ENCODE measurements at regions of chr1 and their contacts with region 1.

Region 1: DNA sequence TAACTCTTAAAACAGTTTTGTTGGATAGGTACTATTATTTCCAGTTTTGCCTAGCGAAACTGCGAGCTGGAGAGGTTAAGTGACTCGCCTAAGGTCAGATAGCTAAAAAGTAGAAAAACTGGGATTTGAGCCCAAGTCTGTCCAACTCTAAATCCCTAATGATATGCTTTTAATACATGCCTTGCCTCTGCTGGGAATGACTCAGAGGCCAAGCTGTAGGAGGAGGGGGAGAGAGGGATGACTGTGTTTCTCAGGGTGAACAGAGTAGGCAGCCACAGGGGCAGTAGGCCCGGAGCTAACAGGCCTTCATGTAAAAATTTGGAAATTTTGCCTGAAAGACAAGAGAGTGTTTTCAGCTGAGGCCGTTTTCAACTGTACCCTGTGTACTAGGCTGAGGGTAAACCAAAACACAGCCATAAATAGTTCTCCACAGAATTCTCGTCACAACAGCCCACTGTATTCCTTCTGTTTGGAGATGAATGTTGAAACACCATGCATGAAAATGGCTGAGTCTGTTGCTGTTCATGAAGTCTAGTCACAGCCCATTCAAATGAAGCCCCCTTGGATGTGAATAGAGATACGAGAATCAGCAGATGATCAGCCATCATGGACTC is 107.5 kb upstream of the HOOK1 start:
- DNase-seq: no peak
- H3K4me3 ChIP-seq: no peak overlapping the region
- H3K27ac ChIP-seq: peak overlapping the region; percentile 22 to 44
- H3K4me1 ChIP-seq: no peaks in the 10 kb centered on the region
- H3K27me3 ChIP-seq: no peaks in the 10 kb centered on the region
- CTCF ChIP-seq: no peak
- POLR2A ChIP-seq: no peak

Region 2: GRCh38 chr1:59653968-59654367 is 53.3 kb before region 1 on chr1:
- intact Hi-C with region 1: no loop called
- DNase-seq: no peak
- H3K4me3 ChIP-seq: no peak overlapping the region
- H3K27ac ChIP-seq: no peak overlapping the region
- H3K4me1 ChIP-seq: no peaks in the 10 kb centered on the region
- H3K27me3 ChIP-seq: no peaks in the 10 kb centered on the region
- CTCF ChIP-seq: no peak
- POLR2A ChIP-seq: no peak

Region 3: DNA sequence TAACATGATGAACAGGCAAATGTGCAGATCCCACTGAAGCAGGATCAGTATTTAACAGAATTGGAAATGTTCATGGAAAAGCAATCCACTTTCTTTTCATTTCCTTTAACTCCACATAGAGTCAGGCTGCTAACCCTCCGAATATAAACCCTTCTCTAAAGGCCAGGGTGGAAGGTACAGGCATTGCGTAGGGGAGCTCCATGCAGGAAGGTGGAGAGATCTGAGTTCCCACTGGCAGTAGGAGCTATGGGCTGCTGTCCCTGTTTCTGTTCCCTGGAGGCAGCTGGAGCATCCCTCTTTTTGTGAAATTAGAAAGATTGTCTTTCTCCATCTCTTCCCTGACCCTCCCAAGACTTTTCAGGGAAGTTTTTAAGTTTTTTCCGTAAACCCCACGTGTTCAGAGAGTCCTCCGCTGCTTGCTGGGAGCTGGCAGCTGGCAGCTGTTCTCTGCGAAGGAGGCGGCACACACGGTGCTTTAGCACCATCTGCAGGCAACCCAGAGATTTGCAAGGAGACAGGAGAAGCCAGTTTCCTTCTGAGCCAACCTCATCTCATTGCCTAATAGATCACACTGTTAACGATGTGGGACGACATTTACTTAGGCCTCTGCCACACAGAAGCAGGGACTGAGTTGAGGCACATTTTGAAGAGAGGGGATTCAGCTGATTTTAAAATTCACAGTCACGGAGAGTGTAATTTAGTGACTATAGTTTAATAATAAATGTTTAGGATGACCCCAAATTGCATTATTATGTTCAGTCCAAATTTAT is 52.1 kb after region 1 on chr1:
- intact Hi-C with region 1: loop called (anchors 5 kb)
- DNase-seq: peak; percentile 75
- H3K4me3 ChIP-seq: no peak overlapping the region
- H3K27ac ChIP-seq: peak overlapping the region; percentile 48 to 49
- H3K4me1 ChIP-seq: no peaks in the 10 kb centered on the region
- H3K27me3 ChIP-seq: no peaks in the 10 kb centered on the region
- CTCF ChIP-seq: peak; percentile 56 to 97 (median 94)
- POLR2A ChIP-seq: no peak

Measured in prostate gland (tissue), 2 donors.